Endothelial cell of umbilical vein (primary cell): ENCODE measurements at regions of chr1 and their contacts with region 1.

Region 1: DNA sequence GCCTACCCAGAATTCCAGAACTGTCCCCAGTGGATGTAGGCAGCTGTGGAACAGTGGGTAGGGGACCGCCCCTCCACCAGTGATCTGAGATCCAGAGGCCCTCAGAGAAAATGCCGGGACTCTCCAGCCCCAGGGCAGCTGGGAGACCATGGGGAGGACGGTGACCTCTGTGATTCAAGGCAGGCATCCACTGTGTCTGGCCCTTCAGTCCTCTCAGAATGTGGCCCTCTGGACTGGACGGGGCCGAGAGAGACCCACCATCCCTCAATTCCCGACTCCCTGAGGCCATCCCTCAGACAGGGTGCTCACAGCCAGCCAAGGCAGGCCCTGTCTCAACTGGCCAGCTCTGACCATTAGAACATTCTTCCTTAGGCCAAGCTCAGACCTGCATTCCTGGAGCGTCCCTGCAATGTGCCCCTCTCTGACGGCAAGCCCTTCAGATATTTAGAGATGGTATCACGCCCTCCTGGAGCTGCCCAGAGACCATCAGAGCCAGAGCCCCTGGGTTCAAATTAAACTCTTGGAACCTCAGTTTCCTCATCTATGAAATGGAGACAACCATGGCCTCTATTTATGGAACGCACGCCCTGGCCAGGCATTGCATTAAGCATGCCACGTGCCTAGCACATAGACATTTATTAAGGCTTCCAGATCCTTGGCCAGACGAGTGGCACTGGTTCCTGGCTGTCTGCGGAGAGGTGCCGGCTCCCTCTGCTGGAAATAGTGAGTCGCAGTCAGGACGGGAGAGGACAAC is 9.6 kb upstream of the EPS8L3 start:
- DNase-seq: peak; percentile 78
- H3K4me3 ChIP-seq: no peak overlapping the region
- H3K27ac ChIP-seq: no peak overlapping the region
- H3K4me1 ChIP-seq: no peaks in the 10 kb centered on the region
- H3K27me3 ChIP-seq: peaks cover 0 to 4% of the 10 kb centered on the region in 2 experiments
- CTCF ChIP-seq: peak; percentile 88 to 92
- POLR2A ChIP-seq: no peak

Region 2: GRCh38 chr1:109649491-109649914 is 123.8 kb before region 1 on chr1:
- CTCF ChIA-PET with region 1: interaction called, 69 read pairs
- POLR2A ChIA-PET with region 1: no interaction called
- dilution Hi-C with region 1: no loop called
- intact Hi-C with region 1: no loop called
- DNase-seq: peak; percentile 60
- H3K4me3 ChIP-seq: peak overlapping the region; percentile 18 to 54 (median 37)
- H3K27ac ChIP-seq: no peak overlapping the region
- H3K4me1 ChIP-seq: no peaks in the 10 kb centered on the region
- H3K27me3 ChIP-seq: peaks cover 16 to 23% of the 10 kb centered on the region in 2 experiments
- CTCF ChIP-seq: peak in 1 of 2 donors; percentile 27
- POLR2A ChIP-seq: no peak

Region 3: DNA sequence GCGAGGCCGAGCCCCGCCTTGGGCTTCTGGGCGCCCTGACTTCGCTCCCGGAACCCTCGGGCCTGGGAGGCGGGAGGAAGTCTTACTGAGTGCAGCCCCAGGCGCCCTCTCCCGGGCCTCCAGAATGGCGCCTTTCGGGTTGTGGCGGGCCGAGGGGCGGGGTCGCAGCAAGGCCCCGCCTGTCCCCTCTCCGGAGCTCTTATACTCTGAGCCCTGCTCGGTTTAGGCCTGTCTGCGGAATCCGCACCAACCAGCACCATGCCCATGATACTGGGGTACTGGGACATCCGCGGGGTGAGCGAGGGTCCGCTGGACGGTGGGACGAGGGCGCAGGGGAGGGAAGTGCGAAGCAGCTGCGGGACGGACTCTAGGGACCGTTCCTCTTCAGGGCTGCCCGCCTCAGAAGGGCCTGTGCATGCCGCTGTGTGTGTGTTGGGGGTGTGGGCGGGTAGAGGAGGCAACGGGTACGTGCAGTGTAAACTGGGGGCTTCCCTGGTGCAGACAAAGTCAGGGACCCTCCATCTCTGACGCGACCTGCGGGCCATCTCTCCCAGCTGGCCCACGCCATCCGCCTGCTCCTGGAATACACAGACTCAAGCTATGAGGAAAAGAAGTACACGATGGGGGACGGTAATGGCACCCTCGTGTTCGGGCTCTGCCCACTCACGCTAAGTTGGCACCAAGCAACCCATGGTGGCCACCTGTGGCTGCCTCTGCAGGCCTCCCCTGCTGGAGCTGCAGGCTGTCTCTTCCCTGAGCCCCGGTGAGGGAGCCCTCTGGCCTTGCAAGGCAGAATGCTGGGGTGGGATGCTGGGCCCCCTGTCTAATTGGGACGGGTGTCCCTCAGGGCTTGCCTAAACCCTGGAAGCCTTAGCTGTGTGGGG is 85.5 kb before region 1 on chr1 and contains the start of gene GSTM1:
- CTCF ChIA-PET with region 1: interaction called, 11 read pairs
- POLR2A ChIA-PET with region 1: no interaction called
- dilution Hi-C with region 1: no loop called
- intact Hi-C with region 1: no loop called
- DNase-seq: no peak
- H3K4me3 ChIP-seq: no peak within 1 kb of the TSS
- H3K27ac ChIP-seq: no peak within 1 kb of the TSS
- H3K4me1 ChIP-seq: no peaks in the 10 kb centered on the region
- H3K27me3 ChIP-seq: no peaks in the 10 kb centered on the region
- CTCF ChIP-seq: no peak
- POLR2A ChIP-seq: no peak
- total RNA-seq, gene GSTM1: 35.5 TPM in 1 of 2 replicates, not detected in the other

Region 4: DNA sequence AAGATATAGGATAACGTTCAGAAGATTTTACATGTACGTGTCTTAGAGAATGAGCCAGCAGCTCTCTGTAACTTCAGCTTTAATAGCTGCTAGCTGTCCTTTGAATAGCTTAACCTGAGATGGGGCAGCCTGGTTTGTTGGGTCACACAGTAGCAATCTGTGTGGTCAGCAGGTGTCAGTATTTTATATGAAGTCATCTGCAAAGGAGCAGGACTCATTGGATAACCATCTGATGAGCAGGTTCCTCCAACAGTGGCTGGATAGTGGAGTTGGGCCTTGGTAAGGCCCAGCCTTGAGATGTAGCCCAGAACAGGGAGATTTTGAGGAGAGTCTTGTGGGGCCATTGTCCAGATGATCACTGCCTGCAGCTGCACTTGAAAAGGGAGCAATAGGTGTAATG is 54.8 kb before region 1 on chr1:
- CTCF ChIA-PET with region 1: interaction called, 15 read pairs
- POLR2A ChIA-PET with region 1: no interaction called
- dilution Hi-C with region 1: no loop called
- intact Hi-C with region 1: loop called (anchors 1 kb)
- DNase-seq: peak; percentile 32
- H3K4me3 ChIP-seq: no peak overlapping the region
- H3K27ac ChIP-seq: no peak overlapping the region
- H3K4me1 ChIP-seq: peaks cover 8% of the 10 kb centered on the region
- H3K27me3 ChIP-seq: no peaks in the 10 kb centered on the region
- CTCF ChIP-seq: peak in 1 of 2 donors; percentile 12
- POLR2A ChIP-seq: no peak

Region 5: DNA sequence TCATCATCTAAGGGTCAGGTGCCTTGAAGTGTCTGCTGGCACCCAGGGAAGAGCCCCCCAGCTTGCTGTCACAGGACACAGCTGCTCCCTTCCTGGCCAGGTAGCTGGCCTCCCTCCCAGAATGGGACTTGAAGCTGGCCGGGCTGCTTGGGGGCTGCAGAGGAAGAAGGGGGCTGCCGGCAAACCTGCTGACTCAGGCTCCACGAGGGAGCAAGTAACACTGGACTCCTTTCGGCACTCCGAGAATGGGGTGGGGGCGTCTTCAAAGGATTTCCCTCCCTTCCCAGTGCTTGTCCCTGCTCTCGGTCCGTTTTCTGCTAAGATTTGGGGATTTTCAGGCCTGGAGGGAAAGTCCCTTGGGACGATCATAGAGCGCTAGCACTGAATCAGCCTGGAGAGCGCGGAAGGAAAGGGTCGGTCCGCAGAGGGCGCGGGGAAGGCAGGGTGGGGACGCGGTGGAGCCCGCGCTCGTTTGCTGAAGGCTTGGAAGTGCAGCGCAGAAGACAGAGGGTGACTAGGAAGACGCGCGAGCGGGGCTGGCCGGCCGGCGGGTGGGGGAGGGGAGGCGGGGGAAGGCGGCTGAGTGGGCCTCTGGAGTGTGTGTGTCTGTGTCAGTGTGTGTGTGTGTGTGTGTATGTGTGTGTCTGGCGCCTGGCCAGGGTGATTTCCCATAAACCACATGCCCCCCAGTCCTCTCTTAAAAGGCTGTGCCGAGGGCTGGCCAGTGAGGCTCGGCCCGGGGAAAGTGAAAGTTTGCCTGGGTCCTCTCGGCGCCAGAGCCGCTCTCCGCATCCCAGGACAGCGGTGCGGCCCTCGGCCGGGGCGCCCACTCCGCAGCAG is 137.0 kb after region 1 on chr1 and contains the start of gene CSF1:
- CTCF ChIA-PET with region 1: interaction called, 7 read pairs
- POLR2A ChIA-PET with region 1: no interaction called
- dilution Hi-C with region 1: no loop called
- intact Hi-C with region 1: loop called (anchors 2 kb)
- DNase-seq: peak; percentile 77
- H3K4me3 ChIP-seq: peak within 1 kb of the TSS; percentile 36 to 91 (median 45)
- H3K27ac ChIP-seq: peak within 1 kb of the TSS; percentile 45
- H3K4me1 ChIP-seq: peaks cover 8% of the 10 kb centered on the region
- H3K27me3 ChIP-seq: peaks cover 0 to 4% of the 10 kb centered on the region in 2 experiments
- CTCF ChIP-seq: no peak
- POLR2A ChIP-seq: no peak
- total RNA-seq, gene CSF1: 22.7 and 28.9 TPM in 2 replicates

Region 6: DNA sequence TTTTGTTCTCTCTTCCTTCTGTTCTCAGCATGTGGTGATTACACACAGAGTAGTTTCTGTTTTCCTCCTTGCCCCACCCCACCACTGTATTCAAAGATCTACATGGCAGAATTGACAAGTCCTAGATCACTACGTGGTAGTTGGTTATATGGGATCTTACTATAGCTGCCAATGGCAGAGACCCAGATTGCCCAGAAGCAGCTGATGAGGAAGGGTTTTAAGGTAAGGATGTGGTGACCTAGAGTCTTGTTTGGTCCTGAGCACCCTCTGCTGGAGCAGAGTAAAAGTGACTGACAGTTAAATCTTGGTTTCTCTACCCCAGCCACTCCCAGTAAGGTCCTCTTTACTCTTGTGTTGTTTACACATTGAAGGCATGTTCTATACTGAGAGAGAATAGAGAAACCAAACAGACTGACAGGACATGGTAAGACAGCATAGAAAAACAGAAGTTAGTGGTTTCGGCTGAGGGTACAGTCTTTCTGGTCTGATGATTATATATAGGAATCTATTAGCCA is 238.3 kb after region 1 on chr1:
- CTCF ChIA-PET with region 1: interaction called, 42 read pairs
- POLR2A ChIA-PET with region 1: no interaction called
- dilution Hi-C with region 1: loop called (anchors 25 kb)
- intact Hi-C with region 1: loop called (anchors 1 kb)
- DNase-seq: peak; percentile 49
- H3K4me3 ChIP-seq: no peak overlapping the region
- H3K27ac ChIP-seq: no peak overlapping the region
- H3K4me1 ChIP-seq: no peaks in the 10 kb centered on the region
- H3K27me3 ChIP-seq: no peaks in the 10 kb centered on the region
- CTCF ChIP-seq: peak; percentile 24 to 40
- POLR2A ChIP-seq: no peak